Activated CD4-positive, alpha-beta memory T cell treated with anti-CD3 and anti-CD28 coated beads for 36 hours (primary cell): ENCODE measurements at regions of chr10 and their contacts with region 1.

Region 1: GRCh38 chr10:6423004-6423403 is 157.1 kb downstream of the PRKCQ start:
- DNase-seq: peak; percentile 76
- H3K4me3 Mint-ChIP-seq: no peak overlapping the region
- H3K27ac Mint-ChIP-seq: peak overlapping the region; percentile 70
- H3K4me1 Mint-ChIP-seq: peaks cover 22% of the 10 kb centered on the region
- H3K27me3 Mint-ChIP-seq: no peaks in the 10 kb centered on the region

Region 2: DNA sequence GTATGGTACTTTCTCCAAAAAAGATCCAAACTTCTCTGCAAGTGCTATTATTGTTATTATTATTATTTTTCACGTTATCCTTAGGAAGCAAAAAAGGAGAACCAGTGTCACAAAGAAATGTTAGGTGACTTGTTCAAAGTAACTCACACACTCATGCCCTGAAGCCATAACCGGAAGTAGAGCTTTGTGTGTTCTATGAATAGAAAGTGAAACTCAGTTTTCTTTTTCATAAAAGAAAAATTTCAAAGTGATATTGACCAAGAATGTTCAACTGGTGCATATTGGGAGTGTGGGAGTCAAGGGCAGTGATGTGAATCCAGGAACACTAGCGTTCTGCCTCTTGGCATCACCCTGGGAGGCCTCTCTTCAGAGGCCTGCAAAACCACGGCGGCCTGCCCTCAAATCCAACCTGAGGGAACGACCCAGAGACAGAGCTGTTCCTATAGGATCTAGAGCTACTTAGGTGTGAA is 50.9 kb after region 1 on chr10:
- CTCF ChIA-PET with region 1: no interaction called
- POLR2A ChIA-PET with region 1: no interaction called
- intact Hi-C with region 1: loop called (anchors 5 kb)
- DNase-seq: peak; percentile 54
- H3K4me3 Mint-ChIP-seq: peak overlapping the region; percentile 73
- H3K27ac Mint-ChIP-seq: peak overlapping the region; percentile 93
- H3K4me1 Mint-ChIP-seq: peaks cover 48% of the 10 kb centered on the region
- H3K27me3 Mint-ChIP-seq: no peaks in the 10 kb centered on the region

Region 3: DNA sequence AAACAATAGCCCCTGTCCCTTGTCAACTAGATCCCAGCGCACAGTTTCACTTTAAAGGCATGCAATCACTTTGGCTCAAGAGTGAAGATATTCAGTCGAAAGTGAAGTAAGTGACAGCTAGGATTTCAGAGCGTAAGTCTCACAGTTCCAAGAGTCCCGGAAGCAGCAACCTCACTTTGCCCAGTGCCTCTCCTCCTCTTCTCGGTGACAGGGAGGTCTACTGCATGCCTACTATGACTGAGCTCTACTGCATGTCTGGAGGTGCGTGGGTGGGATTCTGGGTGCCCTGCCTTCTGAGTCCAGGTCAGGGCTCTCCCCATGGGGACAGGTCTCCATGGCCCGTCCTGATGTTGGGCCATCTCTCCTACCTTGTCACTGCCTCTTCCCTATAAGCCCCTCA is 140.1 kb after region 1 on chr10:
- CTCF ChIA-PET with region 1: no interaction called
- POLR2A ChIA-PET with region 1: no interaction called
- intact Hi-C with region 1: loop called (anchors 1 kb)
- DNase-seq: peak; percentile 86
- H3K4me3 Mint-ChIP-seq: peak overlapping the region; percentile 72
- H3K27ac Mint-ChIP-seq: peak overlapping the region; percentile 91
- H3K4me1 Mint-ChIP-seq: peaks cover 88% of the 10 kb centered on the region
- H3K27me3 Mint-ChIP-seq: no peaks in the 10 kb centered on the region